Calu3 (cell line): ENCODE measurements at regions of chr2 and their contacts with region 1.

Region 1: DNA sequence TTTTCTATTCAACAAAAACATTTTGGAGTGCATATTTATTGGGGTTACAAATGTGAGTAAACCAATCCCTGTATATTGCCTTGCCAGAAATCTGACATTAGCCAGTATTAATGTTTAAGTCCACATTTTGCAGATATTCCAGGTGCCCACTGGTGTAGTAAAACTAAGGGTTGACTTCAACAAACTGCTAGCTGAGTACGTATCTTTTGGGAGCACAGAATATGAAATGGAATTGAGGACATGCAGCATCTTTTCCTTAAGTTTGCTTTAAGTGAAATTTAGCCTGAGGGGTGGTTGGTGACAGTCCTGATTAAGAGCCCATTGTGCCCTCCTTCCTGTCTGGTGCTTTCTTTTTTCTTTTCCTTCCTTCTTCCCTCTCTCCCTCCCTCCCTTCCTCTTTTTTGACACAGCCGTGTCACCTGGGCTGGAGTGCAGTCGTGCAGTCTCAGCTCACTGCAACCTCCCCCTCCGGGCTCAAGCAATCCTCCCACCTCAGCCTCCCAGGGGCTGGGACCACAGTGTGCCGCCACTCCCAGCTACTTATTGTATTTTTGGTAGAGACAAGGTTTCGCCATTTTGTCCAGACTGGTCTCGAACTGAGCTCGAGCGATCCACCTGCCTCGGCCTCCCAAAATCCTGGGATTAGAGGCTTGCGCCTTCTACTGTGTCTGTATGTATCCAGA is 1.6 kb downstream of the NUP35 start:
- DNase-seq: peak; percentile 14
- H3K4me3 Mint-ChIP-seq: peak overlapping the region; percentile 88
- H3K27ac Mint-ChIP-seq: peak overlapping the region; percentile 93
- H3K4me1 Mint-ChIP-seq: peaks cover 19% of the 10 kb centered on the region
- H3K27me3 Mint-ChIP-seq: no peaks in the 10 kb centered on the region
- CTCF ChIP-seq: no peak

Region 2: GRCh38 chr2:182744490-182744889 is 381.3 kb before region 1 on chr2:
- CTCF ChIA-PET with region 1: no interaction called
- intact Hi-C with region 1: no loop called
- DNase-seq: no peak
- H3K4me3 Mint-ChIP-seq: no peak overlapping the region
- H3K27ac Mint-ChIP-seq: peak overlapping the region; percentile 23
- H3K4me1 Mint-ChIP-seq: peaks cover 8% of the 10 kb centered on the region
- H3K27me3 Mint-ChIP-seq: no peaks in the 10 kb centered on the region
- CTCF ChIP-seq: no peak

Region 3: DNA sequence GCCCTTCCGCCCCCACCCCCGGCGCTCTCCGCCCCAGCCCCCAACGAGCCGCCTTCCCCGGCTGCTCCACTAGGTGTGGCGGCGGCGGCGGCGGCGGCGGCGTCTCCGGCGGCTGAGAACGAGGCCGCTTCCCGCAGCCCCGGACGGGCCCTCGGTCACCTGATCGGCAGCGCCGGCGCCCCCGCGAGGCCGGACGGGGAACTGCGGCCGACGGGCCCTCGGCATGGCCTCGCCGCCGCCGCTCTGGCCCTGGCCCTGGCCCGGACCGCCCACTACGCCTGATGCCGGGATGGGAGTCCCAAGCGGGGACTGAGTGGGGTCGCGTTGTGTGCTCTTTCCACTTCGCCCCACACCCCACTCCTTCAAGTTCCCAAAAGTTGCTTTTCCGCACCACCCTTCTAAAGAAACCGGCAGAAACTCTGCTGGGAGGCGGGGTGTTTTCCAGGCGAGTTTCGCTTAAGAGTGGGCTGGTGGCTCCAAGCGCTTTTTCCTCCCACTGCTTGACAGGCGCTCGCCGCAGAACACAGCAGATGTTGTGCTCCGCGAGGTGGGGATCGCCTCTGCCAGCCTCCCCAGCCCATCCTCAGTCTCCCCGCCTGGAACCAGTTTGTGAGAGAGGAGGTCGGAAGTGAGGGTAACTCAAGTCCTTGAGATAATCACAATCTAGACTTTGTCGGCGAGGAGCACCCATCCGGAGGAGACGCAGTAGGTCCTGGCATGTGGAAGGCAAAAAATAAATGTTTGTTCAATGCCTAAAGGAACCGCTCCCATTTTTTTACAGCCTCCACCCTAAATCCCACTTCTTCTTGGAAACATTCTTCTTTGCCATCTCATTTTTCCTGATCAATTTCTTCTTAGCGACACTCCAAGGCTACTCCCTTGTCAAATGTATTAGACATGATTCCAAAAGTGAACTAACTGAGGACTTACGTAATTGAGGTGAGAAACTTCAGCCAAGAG is 87.2 kb before region 1 on chr2 and contains the start of gene NCKAP1:
- CTCF ChIA-PET with region 1: no interaction called
- intact Hi-C with region 1: loop called (anchors 5 kb)
- DNase-seq: peak; percentile 98
- H3K4me3 Mint-ChIP-seq: peak within 1 kb of the TSS; percentile 94
- H3K27ac Mint-ChIP-seq: peak within 1 kb of the TSS; percentile 97
- H3K4me1 Mint-ChIP-seq: peaks cover 34% of the 10 kb centered on the region
- H3K27me3 Mint-ChIP-seq: no peaks in the 10 kb centered on the region
- CTCF ChIP-seq: peak; percentile 92
- total RNA-seq, gene NCKAP1: 143 and 157 TPM in 2 replicates

Region 4: DNA sequence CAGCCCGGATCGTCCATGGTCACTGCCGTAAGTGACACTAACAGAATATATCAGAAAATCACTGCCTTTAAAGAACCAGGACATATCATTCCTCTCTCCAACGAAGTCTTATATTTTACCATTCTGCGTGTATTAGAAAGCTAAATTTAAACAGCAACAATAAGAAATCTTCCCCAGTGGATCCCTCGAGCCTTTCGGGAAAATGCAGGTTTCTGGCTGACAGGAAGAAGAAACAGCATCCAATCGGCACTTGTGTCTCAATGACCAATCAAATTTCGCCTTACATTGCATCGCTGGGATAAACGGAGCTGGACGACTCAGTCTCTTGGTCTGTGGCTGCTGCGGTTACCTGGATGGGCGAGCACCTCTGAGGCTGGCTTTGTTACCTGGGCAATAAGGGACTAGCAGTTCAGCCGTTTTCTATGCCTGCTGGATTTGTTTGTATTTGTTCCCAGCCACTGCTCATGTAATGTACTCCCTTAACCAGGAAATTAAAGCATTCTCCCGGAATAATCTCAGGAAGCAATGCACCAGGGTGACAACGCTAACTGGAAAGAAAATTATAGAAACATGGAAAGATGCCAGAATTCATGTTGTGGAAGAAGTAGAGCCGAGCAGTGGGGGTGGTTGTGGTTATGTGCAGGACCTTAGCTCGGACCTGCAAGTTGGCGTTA is 47.2 kb before region 1 on chr2 and contains the start of gene DUSP19:
- CTCF ChIA-PET with region 1: interaction called, 3 read pairs
- intact Hi-C with region 1: loop called (anchors 5 kb)
- DNase-seq: peak; percentile 94
- H3K4me3 Mint-ChIP-seq: peak within 1 kb of the TSS; percentile 83
- H3K27ac Mint-ChIP-seq: peak within 1 kb of the TSS; percentile 85
- H3K4me1 Mint-ChIP-seq: no peaks in the 10 kb centered on the region
- H3K27me3 Mint-ChIP-seq: no peaks in the 10 kb centered on the region
- CTCF ChIP-seq: no peak
- total RNA-seq, gene DUSP19: 1.6 and 2.7 TPM in 2 replicates

Region 5: DNA sequence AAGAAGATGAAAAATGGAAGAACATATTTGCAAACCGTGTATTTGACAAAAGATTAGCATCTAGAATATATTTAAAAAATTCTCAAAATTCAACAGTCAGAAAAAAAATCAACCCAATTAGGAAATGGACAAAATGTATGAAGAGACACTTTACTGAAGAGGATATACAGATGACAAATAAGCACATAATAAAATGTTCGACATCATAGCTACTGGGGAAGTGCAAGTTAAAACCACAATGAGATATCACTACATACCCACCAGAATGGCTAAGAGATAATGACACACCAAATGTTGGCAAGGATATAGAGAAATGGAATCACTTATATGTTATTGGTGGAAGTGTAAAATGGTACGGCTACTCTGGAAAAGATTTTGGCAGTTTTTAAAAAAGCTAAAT is 13.2 kb before region 1 on chr2:
- CTCF ChIA-PET with region 1: no interaction called
- intact Hi-C with region 1: no loop called
- DNase-seq: no peak
- H3K4me3 Mint-ChIP-seq: no peak overlapping the region
- H3K27ac Mint-ChIP-seq: no peak overlapping the region
- H3K4me1 Mint-ChIP-seq: no peaks in the 10 kb centered on the region
- H3K27me3 Mint-ChIP-seq: no peaks in the 10 kb centered on the region
- CTCF ChIP-seq: no peak